MCF 10A (cell line): ENCODE measurements at regions of chr1 and their contacts with region 1.

Region 1: DNA sequence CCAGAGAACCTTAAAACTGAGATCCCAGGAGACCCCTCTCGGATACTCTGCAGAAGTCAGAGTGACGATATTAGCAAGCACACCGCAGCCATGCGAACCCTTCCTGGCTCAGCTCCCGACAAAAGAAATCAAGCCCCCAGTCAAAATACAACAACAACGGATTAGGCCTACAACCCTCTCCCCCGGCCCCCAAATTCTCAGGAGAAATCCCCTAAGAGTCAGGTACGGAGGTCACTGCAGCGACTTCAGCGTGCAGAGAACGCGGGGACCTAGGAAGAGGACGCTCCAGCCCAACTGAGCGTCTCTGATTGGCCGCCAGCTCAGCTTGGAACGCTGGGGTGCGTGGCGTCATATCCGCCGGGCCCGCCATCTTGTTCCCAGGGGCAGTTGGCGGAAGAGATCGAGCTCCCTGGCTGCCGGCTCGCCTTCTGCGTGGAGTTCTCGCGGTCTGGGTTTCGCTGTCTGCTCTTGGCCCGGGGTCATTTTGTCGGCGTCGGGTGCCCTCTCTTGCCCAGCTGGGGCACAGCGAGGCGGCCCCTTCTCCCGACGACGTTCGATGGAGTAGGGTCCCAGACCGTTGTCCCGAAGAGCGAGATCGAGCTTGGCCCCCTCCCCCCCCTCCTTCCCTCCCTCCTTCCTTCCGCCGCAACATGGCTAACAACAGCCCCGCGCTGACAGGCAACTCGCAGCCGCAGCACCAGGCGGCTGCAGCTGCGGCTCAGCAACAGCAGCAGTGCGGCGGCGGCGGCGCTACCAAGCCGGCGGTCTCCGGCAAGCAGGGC is at the start of gene PRPF38B:
- DNase-seq: peak; percentile 93
- H3K4me3 Mint-ChIP-seq: peak within 1 kb of the TSS; percentile 100
- H3K27ac Mint-ChIP-seq: peak within 1 kb of the TSS; percentile 99
- H3K4me1 Mint-ChIP-seq: peaks cover 26% of the 10 kb centered on the region
- H3K27me3 Mint-ChIP-seq: no peaks in the 10 kb centered on the region
- CTCF ChIP-seq: no peak
- total RNA-seq, gene PRPF38B: 65.1 and 65.3 TPM in 2 replicates

Region 2: DNA sequence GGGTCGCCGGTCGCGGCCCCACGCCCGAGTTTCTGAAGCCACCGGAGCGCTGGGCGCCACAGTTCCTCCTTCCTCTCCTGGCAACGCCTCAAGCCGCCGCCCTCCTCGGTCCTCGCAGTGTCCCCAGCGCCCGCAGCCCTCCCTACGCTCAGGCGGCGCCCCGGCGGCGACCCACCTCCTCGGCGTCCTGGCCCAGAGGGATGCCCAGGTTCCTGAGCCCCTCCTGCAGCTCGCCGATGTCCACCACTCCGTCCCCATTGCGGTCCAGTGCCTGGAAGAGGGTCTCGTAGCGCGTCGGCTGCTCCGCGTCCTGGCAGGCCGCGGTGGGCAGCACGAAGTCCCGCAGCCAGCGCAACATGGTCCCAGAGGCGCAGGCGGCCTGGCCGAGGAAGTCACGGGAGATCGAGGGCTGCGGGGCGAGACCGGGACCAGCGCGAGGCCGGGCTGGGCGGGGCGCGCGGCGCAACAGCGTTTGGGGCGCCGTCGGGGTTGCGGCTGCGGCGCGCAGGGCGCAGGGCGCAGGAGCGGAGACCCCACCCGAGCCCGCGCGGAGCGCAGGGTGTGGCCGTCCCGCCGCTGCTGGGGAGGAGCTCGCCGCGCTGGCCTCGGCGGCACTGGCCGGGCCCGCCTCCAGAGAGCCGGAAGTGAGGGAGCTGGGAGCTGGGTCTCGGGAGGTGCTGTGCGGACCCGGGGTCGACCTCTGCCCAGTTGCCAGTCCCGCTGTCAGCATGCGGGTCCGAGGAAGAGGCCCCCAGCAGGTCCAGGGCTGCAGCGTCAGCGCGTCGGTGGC is 492.2 kb before region 1 on chr1 and contains the start of gene SLC25A24:
- CTCF ChIA-PET with region 1: interaction called, 3 read pairs
- POLR2A ChIA-PET with region 1: interaction called, 38 read pairs
- intact Hi-C with region 1: no loop called
- DNase-seq: peak; percentile 81
- H3K4me3 Mint-ChIP-seq: peak within 1 kb of the TSS; percentile 92
- H3K27ac Mint-ChIP-seq: peak within 1 kb of the TSS; percentile 91
- H3K4me1 Mint-ChIP-seq: peaks cover 27% of the 10 kb centered on the region
- H3K27me3 Mint-ChIP-seq: no peaks in the 10 kb centered on the region
- CTCF ChIP-seq: no peak
- total RNA-seq, gene SLC25A24: 21.0 and 28.3 TPM in 2 replicates

Region 3: GRCh38 chr1:108627256-108627655 is 64.9 kb before region 1 on chr1:
- CTCF ChIA-PET with region 1: no interaction called
- POLR2A ChIA-PET with region 1: no interaction called
- intact Hi-C with region 1: no loop called
- DNase-seq: no peak
- H3K4me3 Mint-ChIP-seq: no peak overlapping the region
- H3K27ac Mint-ChIP-seq: no peak overlapping the region
- H3K4me1 Mint-ChIP-seq: no peaks in the 10 kb centered on the region
- H3K27me3 Mint-ChIP-seq: no peaks in the 10 kb centered on the region
- CTCF ChIP-seq: no peak

Region 4: DNA sequence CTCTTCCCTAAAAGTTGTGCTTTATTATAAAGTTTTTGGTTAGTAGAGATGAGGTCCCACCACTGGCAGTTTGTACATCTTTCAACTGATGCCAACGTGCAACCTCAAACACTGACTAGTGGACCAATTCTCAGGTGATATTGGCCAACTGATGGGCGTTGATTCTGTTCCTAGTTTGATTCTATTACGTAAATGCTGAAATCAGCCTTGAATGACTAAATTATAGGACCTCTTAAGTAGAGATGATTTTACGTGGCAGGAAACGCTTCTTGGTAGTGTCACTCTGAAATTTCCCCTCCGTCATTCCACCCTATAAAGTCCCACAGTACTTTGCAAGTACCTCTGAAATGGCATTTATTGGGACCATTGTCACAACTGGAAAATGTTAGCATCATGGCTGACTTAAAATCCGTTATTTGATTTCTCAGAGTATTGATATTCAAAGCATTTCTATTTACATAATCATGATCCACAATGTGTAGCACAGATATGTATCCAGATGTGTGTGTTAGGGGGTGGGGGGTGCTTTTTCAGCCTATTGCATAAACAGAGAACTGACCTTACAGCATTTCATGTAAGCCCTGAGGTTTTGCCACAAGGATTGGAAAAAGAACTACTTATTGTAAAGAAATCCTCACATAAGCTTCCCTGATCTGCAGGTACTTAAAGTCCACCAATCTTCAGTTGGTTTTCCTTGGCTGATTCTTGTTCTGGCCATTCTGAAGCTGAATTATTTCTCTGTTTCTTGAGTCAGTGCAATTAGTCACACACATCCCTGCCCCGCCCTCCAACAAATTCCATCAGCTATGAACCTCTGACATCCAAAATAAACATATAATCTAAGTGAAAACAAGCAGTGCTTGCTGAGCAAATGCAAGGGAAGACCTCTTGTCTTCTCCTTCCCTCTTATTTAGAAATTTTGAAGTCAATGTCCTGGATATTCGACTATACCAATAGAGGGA is 12.1 kb after region 1 on chr1:
- CTCF ChIA-PET with region 1: interaction called, 5 read pairs
- POLR2A ChIA-PET with region 1: interaction called, 86 read pairs
- intact Hi-C with region 1: no loop called
- DNase-seq: peak; percentile 74
- H3K4me3 Mint-ChIP-seq: no peak overlapping the region
- H3K27ac Mint-ChIP-seq: peak overlapping the region; percentile 46
- H3K4me1 Mint-ChIP-seq: peaks cover 19% of the 10 kb centered on the region
- H3K27me3 Mint-ChIP-seq: no peaks in the 10 kb centered on the region
- CTCF ChIP-seq: no peak

Region 5: DNA sequence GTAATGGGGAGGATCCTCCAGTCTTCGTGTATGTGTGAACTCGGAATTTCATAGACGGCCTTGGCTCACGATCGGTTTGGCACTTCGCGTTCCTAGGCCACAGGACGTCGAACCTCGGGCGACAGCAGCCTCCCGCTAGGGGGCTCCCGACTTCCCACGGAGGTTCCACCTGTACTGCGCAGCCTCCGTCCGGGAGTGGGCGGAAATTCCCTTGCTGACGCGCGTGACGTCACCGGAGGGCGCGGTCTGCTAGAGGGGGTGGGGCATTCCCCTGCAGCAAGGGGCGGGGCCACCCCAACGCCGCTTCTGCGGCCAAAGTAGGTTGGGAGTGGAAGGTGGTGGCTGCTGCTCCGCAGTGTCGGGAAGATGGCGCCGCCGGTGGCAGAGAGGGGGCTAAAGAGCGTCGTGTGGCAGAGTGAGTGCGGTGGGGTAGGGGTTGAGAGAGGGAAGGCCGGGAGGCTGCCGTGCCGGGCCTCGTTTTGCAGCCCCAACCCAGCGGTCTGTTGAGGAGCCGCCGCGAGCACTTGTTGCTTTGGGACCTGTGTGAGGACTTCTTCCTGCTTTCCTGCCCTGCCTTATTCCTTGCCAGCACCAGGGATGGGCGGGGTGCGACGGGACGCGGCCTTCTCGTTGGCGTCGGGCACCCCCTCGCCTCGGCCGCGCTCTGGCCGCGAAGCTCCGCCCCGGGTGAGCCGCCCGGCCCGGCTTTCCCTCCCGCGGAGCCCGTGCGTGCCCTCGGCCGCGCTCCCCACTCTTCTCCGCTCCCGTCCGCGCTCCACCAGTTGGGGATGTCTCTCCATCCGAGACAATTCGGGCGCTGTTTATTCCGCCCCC is 54.5 kb after region 1 on chr1 and contains the start of gene STXBP3:
- CTCF ChIA-PET with region 1: interaction called, 6 read pairs
- POLR2A ChIA-PET with region 1: interaction called, 99 read pairs
- intact Hi-C with region 1: loop called (anchors 1 kb)
- DNase-seq: peak; percentile 97
- H3K4me3 Mint-ChIP-seq: peak within 1 kb of the TSS; percentile 92
- H3K27ac Mint-ChIP-seq: peak within 1 kb of the TSS; percentile 98
- H3K4me1 Mint-ChIP-seq: peaks cover 12% of the 10 kb centered on the region
- H3K27me3 Mint-ChIP-seq: no peaks in the 10 kb centered on the region
- CTCF ChIP-seq: peak; percentile 89
- total RNA-seq, gene STXBP3: 47.4 and 58.4 TPM in 2 replicates

Region 6: DNA sequence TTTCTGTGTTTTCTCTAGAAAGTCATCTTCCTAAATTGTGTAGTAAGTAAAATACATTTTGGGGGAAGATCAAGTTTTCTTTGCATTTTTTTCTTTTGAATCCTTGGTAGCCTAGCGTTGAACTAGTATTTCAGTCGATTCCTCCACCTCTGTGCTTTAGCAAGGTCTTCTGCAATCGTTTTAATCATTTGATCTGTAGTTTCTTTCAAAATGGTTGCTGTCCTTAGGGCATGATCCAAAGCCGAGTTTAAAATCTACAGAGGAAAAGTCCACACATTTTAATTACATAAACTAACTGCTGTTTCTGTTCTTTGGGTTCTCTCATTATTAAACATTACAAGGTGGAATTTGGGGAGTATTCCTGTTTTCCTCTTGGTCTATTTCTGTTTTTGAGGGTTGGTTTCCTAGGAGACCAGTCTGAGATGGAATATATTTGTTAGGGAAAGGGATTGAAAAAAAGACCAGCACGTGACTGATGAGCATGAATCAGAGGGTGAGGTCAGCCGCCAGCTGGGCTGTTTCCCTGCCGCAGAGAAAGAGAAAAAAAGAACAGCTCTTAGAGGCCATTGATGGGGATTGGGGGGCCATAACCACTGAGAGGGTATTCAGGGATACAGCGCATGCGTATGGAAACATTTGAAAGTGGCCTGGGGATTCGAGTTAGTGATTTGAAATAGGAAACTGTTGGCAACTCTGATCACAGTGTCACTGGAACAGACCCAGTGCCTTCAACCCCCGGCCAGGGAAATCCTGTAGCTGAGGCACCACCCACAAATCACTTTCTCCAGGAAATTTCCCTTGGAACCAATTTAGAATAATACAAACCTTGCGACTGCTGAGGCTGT is 124.1 kb after region 1 on chr1:
- CTCF ChIA-PET with region 1: no interaction called
- POLR2A ChIA-PET with region 1: interaction called, 19 read pairs
- intact Hi-C with region 1: loop called (anchors 2 kb)
- DNase-seq: peak; percentile 69
- H3K4me3 Mint-ChIP-seq: peak overlapping the region; percentile 68
- H3K27ac Mint-ChIP-seq: peak overlapping the region; percentile 100
- H3K4me1 Mint-ChIP-seq: peaks cover 27% of the 10 kb centered on the region
- H3K27me3 Mint-ChIP-seq: no peaks in the 10 kb centered on the region
- CTCF ChIP-seq: no peak

Region 7: DNA sequence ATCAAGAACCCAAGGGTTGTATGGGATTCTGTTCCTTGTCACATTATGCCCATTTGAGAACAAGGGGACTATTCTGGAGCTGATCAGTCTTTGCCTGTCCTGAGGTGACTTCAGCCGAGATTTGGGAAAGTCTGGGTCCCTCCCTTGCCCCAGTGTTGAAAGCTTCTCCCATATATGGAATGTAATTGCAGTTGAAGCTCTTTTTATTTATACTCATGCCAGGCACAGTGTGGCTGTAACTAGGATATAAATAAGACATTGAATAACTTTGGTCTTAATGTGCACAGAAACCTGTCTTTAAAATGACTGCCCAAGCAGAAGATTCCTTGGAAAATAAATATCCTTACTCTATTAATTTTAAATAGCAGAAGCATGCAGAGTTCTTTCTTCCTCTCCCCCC is 149.6 kb after region 1 on chr1:
- CTCF ChIA-PET with region 1: no interaction called
- POLR2A ChIA-PET with region 1: no interaction called
- intact Hi-C with region 1: no loop called
- DNase-seq: no peak
- H3K4me3 Mint-ChIP-seq: no peak overlapping the region
- H3K27ac Mint-ChIP-seq: no peak overlapping the region
- H3K4me1 Mint-ChIP-seq: peaks cover 34% of the 10 kb centered on the region
- H3K27me3 Mint-ChIP-seq: no peaks in the 10 kb centered on the region
- CTCF ChIP-seq: no peak